PC-9 (cell line): ENCODE measurements at regions of chr22 and their contacts with region 1.

Region 1: DNA sequence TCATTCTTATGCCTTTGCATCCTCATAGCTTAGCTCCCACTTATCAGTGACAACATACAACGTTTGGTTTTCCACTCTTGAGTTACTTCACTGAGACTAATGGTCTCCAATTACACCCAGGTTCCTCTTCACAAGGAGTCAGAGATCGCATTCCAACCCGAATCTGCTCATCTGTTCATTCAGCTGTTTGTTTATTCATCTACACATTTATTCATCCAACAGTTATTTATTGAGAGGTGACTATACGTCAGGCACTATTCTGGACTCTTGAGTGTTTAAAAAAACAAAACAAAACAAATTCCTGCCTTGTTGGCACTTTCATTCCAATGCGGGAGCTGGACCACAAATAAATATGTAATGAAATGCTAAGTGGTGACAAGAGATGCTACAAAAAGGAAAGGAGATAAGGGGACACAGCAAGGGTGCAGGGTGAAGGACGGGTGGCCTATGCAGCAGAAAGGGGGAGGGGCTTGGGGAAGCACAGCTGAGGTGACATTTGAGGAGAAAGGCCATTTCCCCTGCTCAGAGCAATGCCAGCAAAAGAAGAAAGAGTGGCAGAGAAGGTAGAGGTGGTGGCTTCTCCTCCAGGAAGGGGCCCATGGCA is 393.8 kb upstream of the SYN3 start:
- DNase-seq: no peak
- H3K4me3 ChIP-seq: no peak overlapping the region
- H3K27ac ChIP-seq: no peak overlapping the region
- H3K4me1 ChIP-seq: no peaks in the 10 kb centered on the region
- H3K27me3 ChIP-seq: no peaks in the 10 kb centered on the region
- CTCF ChIP-seq: no peak

Region 2: DNA sequence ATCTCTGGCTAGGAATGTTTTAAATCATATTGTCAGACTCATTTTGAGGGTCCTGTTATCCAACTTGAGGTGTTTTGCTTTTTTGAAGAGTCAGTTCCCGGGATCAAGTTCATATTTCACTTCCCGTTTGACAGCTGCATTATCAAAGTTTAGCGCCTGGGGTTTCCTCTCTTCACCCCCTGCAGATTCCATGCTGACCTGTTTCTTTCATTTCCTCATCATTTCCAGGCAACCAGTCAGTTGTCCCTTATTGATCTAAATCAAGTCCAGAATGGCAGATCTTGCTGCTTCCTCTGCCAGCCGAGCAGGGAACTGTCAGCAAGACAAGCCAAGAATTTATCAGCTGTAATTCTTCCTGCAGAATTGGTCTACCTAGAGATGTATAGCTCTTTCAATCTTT is 196.2 kb before region 1 on chr22:
- CTCF ChIA-PET with region 1: no interaction called
- POLR2A ChIA-PET with region 1: no interaction called
- intact Hi-C with region 1: no loop called
- DNase-seq: no peak
- H3K4me3 ChIP-seq: no peak overlapping the region
- H3K27ac ChIP-seq: no peak overlapping the region
- H3K4me1 ChIP-seq: no peaks in the 10 kb centered on the region
- H3K27me3 ChIP-seq: peaks cover 55% of the 10 kb centered on the region
- CTCF ChIP-seq: no peak

Region 3: GRCh38 chr22:33438273-33438672 is 13.7 kb before region 1 on chr22:
- CTCF ChIA-PET with region 1: interaction called, 19 read pairs
- POLR2A ChIA-PET with region 1: no interaction called
- intact Hi-C with region 1: no loop called
- DNase-seq: peak; percentile 47 to 86
- H3K4me3 ChIP-seq: no peak overlapping the region
- H3K27ac ChIP-seq: peak overlapping the region; percentile 72
- H3K4me1 ChIP-seq: peaks cover 24% of the 10 kb centered on the region
- H3K27me3 ChIP-seq: no peaks in the 10 kb centered on the region
- CTCF ChIP-seq: no peak